Activated T-helper 1 cell treated with anti-CD3 and anti-CD28 coated beads, Interleukin-12 subunit alpha, Interleukin-12 subunit beta, Interleukin-2, Interleukin-4 antibody, amounts not matched to agents 30 ng/mL and 10 ng/mL and 1 ng/mL, durations not matched to agents 14 hours and 24 hours and 36 hours (primary cell): ENCODE measurements at regions of chr20 and their contacts with region 1.

Region 1: DNA sequence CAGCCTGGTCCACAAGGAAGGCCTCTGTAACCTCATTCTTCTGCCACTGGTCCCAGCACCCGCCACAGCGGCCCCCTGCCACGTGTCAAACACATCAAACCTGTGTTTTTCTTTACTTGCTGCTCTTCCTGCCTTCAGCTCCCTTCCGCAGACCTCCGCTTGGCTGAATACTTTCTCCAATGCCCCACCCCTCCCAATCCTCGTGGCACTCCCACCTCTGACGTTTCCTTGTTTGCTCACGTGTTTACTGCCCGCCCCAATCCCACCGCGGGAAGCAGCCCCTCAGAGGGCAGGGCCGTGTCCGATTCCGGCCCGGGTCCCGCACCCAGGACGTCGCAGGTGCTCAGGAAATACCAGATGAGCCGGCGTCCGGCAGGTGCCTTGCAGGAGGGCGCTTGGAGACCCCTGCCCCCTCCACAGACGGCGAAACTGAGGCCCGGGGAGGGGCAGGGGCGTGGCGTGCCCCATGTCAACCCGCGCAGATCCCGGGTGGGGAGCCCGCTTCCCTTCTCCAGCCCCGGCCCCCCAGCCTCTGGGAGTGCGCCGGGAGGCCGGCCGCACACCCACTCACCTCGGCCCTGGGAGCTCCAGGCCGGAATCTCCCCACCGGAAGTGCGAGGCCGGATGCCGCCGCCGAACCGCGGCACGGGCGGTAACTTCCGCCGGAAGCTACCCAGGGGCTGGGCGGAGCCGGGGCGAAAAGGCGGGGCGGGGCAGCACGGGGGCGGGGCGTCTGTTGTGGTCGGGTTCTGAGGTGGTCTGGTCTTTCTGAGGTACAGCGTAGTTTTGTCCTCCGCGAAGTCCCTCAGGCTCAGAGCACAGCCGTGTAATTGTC is 42.4 kb downstream of the ELMO2 start:
- DNase-seq: peak; percentile 82
- H3K4me3 Mint-ChIP-seq: peak overlapping the region; percentile 93
- H3K27ac Mint-ChIP-seq: peak overlapping the region; percentile 82
- H3K4me1 Mint-ChIP-seq: peaks cover 66% of the 10 kb centered on the region
- H3K27me3 Mint-ChIP-seq: no peaks in the 10 kb centered on the region

Region 2: DNA sequence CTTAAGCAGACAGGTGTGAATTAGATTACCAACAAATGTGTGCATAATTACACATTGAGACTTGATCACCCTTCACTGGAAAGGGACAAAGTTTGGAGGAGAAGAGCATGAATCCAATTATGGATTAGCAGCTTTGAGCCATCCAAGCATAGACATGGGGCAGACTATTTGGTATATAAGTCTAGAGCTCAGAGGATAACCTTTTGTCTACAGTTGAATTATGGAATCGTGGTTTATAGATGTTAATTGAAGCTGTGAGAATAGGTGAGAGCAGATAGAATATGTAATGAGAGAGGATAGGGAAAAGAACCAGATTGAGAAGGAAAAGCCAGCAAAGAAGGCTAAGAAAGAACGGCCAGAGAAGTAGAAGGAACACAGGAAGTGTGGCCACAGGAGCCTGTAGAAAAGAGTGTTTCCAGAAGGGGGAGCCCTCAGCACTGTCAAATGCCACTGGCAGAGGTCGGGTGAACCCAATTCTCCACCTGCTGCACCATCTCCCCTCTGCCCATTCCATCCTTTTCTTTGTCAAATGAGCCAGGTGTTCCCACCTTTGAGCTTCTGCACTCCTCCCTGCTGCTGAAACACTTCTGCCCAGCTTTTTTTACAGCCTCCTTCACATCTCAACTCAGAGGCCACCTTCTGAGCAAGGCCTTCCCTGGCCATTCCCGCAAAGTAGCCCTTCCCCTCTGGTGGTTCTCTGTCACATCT is 564.9 kb before region 1 on chr20:
- intact Hi-C with region 1: loop called (anchors 10 kb)
- DNase-seq: peak; percentile 64
- H3K4me3 Mint-ChIP-seq: no peak overlapping the region
- H3K27ac Mint-ChIP-seq: peak overlapping the region; percentile 4
- H3K4me1 Mint-ChIP-seq: peaks cover 20% of the 10 kb centered on the region
- H3K27me3 Mint-ChIP-seq: no peaks in the 10 kb centered on the region

Region 3: DNA sequence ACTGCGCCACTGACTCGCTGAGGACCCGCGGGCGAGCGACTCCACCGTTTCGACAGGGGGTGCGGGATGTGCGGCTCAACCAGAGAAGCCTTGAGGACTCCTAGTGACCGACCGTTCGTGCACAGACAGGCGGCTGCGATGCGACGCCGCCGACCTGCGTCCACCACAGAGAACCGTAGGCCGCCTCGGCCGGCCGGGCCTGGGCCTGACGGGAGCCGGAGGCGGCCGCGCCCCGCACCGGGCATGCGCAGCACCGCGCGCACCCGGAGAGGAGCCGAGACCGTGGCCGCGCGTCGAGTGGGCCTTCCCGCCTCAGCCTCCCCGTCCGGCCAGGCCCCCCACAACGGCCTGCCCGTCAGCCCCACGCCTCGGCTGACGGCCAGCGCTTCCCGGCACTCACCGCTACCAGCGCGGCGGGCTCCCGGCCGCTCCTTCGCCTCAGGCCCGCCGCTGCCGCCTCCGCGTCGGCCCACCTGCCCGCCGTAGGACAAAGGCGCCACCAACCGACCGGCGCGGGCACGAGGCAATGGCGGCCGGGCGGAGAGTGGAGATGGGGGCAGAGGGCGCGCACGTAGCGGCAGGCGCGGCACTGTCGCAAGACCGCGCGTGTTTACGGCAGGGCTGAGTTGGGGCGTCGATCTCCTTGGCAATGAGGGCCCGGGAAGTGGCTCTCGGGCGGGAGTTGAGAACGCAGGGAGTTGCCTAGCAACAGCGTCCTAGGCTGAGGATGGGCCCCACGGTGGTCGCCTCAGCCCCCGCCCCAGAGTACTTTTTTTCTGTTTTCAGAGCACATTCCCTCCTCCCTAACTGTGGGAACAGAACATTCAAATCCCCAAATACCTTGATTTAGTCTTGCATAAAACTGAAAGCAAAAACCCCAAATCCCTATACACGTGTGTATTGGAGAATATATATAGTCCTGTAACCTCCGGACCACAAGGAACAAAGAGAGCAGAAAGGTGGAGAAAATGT is 274.3 kb before region 1 on chr20 and contains the start of gene NCOA5:
- intact Hi-C with region 1: loop called (anchors 1 kb)
- DNase-seq: peak; percentile 91
- H3K4me3 Mint-ChIP-seq: peak within 1 kb of the TSS; percentile 92
- H3K27ac Mint-ChIP-seq: peak within 1 kb of the TSS; percentile 94
- H3K4me1 Mint-ChIP-seq: peaks cover 48% of the 10 kb centered on the region
- H3K27me3 Mint-ChIP-seq: peaks cover 4% of the 10 kb centered on the region
- total RNA-seq, gene NCOA5: 30.4 and 32.9 TPM in 2 replicates

Region 4: GRCh38 chr20:46349035-46349741 is 14.8 kb before region 1 on chr20:
- intact Hi-C with region 1: loop called (anchors 1 kb)
- DNase-seq: peak; percentile 22
- H3K4me3 Mint-ChIP-seq: no peak overlapping the region
- H3K27ac Mint-ChIP-seq: no peak overlapping the region
- H3K4me1 Mint-ChIP-seq: peaks cover 9% of the 10 kb centered on the region
- H3K27me3 Mint-ChIP-seq: no peaks in the 10 kb centered on the region

Region 5: DNA sequence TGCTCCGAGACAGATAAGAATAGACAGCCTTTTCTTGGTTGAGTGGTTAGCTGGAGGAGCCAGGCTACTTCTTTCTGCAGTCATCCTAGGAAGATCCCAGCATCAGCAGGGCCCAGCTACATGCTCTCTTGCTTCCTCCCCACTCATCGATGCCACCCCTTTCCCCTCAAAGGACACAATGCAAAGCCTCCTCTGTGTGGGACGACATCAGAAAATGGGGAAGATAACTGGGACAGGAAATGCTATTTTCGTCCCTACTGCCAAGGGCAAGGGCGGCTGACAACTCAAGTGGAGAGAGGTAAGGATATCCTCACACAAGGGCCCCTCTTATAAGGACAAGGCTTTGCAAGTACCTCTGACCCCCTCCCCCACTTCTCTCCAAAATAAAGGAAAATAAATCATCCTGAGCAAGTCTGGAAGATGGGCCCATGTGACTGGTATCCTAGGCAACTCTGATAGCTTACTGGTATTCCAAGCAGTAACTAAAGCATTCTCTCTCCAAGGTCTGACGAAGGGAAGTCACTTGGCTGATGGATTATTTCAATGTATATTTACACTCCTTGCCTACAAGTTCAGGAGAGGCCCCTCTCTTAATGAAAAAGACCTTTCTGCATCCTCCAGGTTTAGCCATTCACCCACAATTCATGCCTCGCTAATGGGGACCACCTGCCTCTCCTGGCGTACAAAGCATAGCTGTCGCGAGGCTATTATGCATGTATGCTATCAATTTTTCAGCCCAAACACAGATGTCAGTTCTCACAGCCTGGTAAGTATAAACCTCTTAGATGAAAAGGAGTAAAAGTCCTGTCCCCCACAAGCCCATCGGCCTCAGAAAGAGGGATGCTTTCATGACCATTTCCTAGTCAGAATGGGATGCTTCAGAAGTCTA is 31.1 kb after region 1 on chr20:
- intact Hi-C with region 1: no loop called
- DNase-seq: no peak
- H3K4me3 Mint-ChIP-seq: no peak overlapping the region
- H3K27ac Mint-ChIP-seq: no peak overlapping the region
- H3K4me1 Mint-ChIP-seq: peaks cover 24% of the 10 kb centered on the region
- H3K27me3 Mint-ChIP-seq: peaks cover 1% of the 10 kb centered on the region

Region 6: GRCh38 chr20:47113362-47114109 is 749.5 kb after region 1 on chr20:
- intact Hi-C with region 1: no loop called
- DNase-seq: no peak
- H3K4me3 Mint-ChIP-seq: no peak overlapping the region
- H3K27ac Mint-ChIP-seq: no peak overlapping the region
- H3K4me1 Mint-ChIP-seq: no peaks in the 10 kb centered on the region
- H3K27me3 Mint-ChIP-seq: peaks cover under 1% of the 10 kb centered on the region

Region 7: GRCh38 chr20:47725248-47725973 is 1361.4 kb after region 1 on chr20:
- intact Hi-C with region 1: loop called (anchors 5 kb)
- DNase-seq: peak; percentile 81
- H3K4me3 Mint-ChIP-seq: no peak overlapping the region
- H3K27ac Mint-ChIP-seq: peak overlapping the region; percentile 14
- H3K4me1 Mint-ChIP-seq: peaks cover 46% of the 10 kb centered on the region
- H3K27me3 Mint-ChIP-seq: no peaks in the 10 kb centered on the region